CD8-positive, alpha-beta memory T cell (primary cell): ENCODE measurements at regions of chr1 and their contacts with region 1.

Region 1: DNA sequence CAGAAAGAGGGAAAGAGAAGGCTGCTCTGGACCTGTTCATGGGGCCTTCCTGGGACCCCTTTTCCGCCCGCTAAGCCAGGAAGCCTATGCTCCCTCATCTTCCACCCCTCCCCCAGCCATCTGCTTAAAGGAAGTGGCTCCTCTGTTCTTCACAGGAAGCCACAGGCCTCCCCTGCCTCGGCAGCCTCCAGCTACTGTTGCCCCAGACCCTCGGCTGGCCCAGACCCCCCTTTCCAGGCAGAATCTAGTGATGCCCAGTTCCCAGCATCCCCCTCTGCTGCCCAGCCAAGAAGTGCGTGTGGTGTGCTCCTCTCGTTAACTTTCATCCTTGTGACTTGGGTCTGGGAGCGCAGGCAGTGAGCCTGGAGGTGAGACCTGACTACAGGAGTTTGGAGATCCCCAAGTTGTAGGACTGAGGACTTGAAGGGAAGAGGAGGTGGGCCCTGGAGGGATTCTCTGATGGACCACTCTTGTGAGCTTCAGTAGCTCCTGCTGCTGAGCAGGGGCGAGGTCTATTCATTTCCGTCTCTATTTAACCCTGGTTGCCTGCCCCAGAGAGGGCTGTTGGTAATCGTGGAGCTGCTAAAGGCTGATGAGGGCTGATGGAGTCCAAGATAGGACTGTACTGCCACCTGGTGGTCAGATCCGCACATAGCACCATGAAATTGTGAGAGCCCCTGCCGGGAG is 9.1 kb downstream of the IFI6 start:
- DNase-seq: peak; percentile 81 to 91 (median 85)
- H3K4me3 ChIP-seq: peak overlapping the region; percentile 74
- H3K4me3 Mint-ChIP-seq: peak overlapping the region; percentile 64 to 89 (median 86)
- H3K27ac ChIP-seq: peak overlapping the region; percentile 81
- H3K27ac Mint-ChIP-seq: peak overlapping the region; percentile 97 to 99 (median 98)
- H3K4me1 ChIP-seq: peaks cover 48% of the 10 kb centered on the region
- H3K4me1 Mint-ChIP-seq: peaks cover 46 to 49% (median 48%) of the 10 kb centered on the region in 3 donors
- H3K27me3 ChIP-seq: no peaks in the 10 kb centered on the region
- H3K27me3 Mint-ChIP-seq: no peaks in the 10 kb centered on the region

Region 2: DNA sequence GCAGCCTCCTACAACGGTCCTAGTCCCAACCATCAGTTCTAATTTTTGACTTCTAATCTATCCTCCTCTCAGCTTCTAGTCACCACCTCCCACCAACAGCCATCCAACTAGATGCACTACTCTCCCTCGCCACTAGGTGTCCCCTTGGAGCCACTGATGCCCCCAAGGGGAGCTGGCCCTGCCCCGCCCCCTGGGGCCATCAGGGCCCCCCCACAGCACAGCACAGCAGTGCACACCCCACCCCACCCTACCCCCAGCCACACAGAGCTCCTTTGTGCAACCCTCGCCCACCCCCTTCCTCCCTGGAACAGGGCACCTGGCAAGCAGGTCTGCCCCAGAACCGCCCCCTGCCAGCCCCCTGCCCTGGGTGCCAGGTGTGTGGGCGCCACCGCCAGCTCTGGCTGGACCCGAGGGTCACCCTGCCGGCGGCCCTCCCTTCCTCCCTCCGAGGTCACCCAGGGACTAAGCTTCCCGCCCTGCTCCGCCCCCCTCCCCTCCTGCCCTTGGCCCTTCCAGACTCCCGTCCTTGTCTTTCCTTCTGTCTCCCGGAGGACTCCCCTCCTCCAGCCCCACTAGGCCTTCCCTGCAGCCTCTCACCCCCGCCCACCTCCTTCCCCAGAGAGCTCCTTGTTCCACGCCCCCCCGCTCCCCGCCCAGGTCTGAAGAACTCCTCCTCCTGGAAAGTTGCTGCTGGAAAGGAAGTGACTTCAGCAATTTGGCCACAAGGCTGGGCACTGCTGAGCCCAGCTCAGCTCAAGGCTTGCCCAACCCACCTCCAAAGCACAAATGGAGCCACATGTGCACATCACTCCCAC is 105.9 kb before region 1 on chr1:
- CTCF ChIA-PET with region 1: interaction called, 36 read pairs
- POLR2A ChIA-PET with region 1: interaction called, 6 read pairs
- DNase-seq: peak; percentile 58 to 82 (median 69)
- H3K4me3 ChIP-seq: peak overlapping the region; percentile 36
- H3K4me3 Mint-ChIP-seq: peak overlapping the region in 5 of 7 donors; percentile 1 to 42 (median 17)
- H3K27ac ChIP-seq: peak overlapping the region; percentile 25
- H3K27ac Mint-ChIP-seq: peak overlapping the region; percentile 12 to 82 (median 47)
- H3K4me1 ChIP-seq: peaks cover 26% of the 10 kb centered on the region
- H3K4me1 Mint-ChIP-seq: peaks cover 20 to 36% (median 20%) of the 10 kb centered on the region in 3 donors
- H3K27me3 ChIP-seq: no peaks in the 10 kb centered on the region
- H3K27me3 Mint-ChIP-seq: no peaks in the 10 kb centered on the region

Region 3: GRCh38 chr1:27568300-27569087 is 94.4 kb before region 1 on chr1:
- CTCF ChIA-PET with region 1: interaction called, 11 read pairs
- POLR2A ChIA-PET with region 1: interaction called, 3 read pairs
- DNase-seq: peak; percentile 91 to 94 (median 92)
- H3K4me3 ChIP-seq: peak overlapping the region; percentile 30
- H3K4me3 Mint-ChIP-seq: peak overlapping the region; percentile 8 to 83 (median 78)
- H3K27ac ChIP-seq: no peak overlapping the region
- H3K27ac Mint-ChIP-seq: peak overlapping the region; percentile 57 to 97 (median 92)
- H3K4me1 ChIP-seq: peaks cover 38% of the 10 kb centered on the region
- H3K4me1 Mint-ChIP-seq: peaks cover 25 to 33% (median 26%) of the 10 kb centered on the region in 3 donors
- H3K27me3 ChIP-seq: no peaks in the 10 kb centered on the region
- H3K27me3 Mint-ChIP-seq: no peaks in the 10 kb centered on the region

Region 4: GRCh38 chr1:27616441-27616840 is 46.4 kb before region 1 on chr1:
- CTCF ChIA-PET with region 1: interaction called, 127 read pairs
- POLR2A ChIA-PET with region 1: no interaction called
- DNase-seq: no peak
- H3K4me3 ChIP-seq: no peak overlapping the region
- H3K4me3 Mint-ChIP-seq: peak overlapping the region in 1 of 7 donors; percentile 38
- H3K27ac ChIP-seq: peak overlapping the region; percentile 13
- H3K27ac Mint-ChIP-seq: peak overlapping the region; percentile 73 to 97 (median 83)
- H3K4me1 ChIP-seq: peaks cover 65% of the 10 kb centered on the region
- H3K4me1 Mint-ChIP-seq: peaks cover 50 to 76% (median 57%) of the 10 kb centered on the region in 3 donors
- H3K27me3 ChIP-seq: no peaks in the 10 kb centered on the region
- H3K27me3 Mint-ChIP-seq: peaks cover 0 to 3% of the 10 kb centered on the region in 2 donors

Region 5: GRCh38 chr1:27632387-27633297 is 30.2 kb before region 1 on chr1:
- CTCF ChIA-PET with region 1: interaction called, 10 read pairs
- POLR2A ChIA-PET with region 1: interaction called, 4 read pairs
- DNase-seq: peak in 2 of 5 donors; percentile 34 to 74
- H3K4me3 ChIP-seq: no peak overlapping the region
- H3K4me3 Mint-ChIP-seq: peak overlapping the region; percentile 70 to 81 (median 79)
- H3K27ac ChIP-seq: peak overlapping the region; percentile 2
- H3K27ac Mint-ChIP-seq: peak overlapping the region; percentile 77 to 96 (median 92)
- H3K4me1 ChIP-seq: peaks cover 67% of the 10 kb centered on the region
- H3K4me1 Mint-ChIP-seq: peaks cover 62 to 80% (median 66%) of the 10 kb centered on the region in 3 donors
- H3K27me3 ChIP-seq: no peaks in the 10 kb centered on the region
- H3K27me3 Mint-ChIP-seq: no peaks in the 10 kb centered on the region

Region 6: GRCh38 chr1:27643701-27644625 is 18.9 kb before region 1 on chr1:
- CTCF ChIA-PET with region 1: interaction called, 56 read pairs
- POLR2A ChIA-PET with region 1: interaction called, 3 read pairs
- DNase-seq: peak; percentile 53 to 82 (median 64)
- H3K4me3 ChIP-seq: no peak overlapping the region
- H3K4me3 Mint-ChIP-seq: no peak overlapping the region
- H3K27ac ChIP-seq: no peak overlapping the region
- H3K27ac Mint-ChIP-seq: peak overlapping the region; percentile 23 to 81 (median 60)
- H3K4me1 ChIP-seq: peaks cover 14% of the 10 kb centered on the region
- H3K4me1 Mint-ChIP-seq: peaks cover 14 to 19% (median 15%) of the 10 kb centered on the region in 3 donors
- H3K27me3 ChIP-seq: no peaks in the 10 kb centered on the region
- H3K27me3 Mint-ChIP-seq: peaks cover 0 to 1% of the 10 kb centered on the region in 2 donors

Region 7: DNA sequence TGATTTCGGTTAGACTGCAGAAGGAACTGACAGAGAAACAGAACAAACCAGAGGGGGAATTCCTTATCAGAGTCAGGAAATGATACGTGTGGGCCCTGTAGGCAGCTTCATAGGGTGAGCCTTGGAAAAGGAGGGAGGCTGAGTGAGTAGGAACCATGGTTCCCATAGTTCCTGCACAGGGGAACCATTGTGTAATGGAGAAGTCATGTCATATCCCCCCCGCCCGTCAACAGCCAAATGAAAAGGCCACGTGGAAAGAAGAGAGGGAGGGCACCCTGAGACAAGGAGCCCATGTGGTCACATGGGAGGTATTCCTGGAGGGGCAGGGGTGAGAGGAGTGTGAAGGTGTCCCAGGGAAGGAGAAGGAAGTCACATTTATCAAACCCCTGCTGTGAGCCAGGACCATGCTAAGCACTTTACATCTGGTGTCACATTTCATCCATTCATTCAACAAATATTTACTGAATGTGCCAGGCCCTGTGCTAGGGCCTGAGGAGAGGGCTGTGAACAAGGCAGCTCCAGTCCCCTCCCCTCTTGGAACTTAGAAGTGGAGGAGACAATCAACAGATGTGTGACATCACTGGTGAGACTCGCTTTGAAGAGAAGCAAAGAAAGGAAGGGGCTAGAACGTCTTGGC is 12.2 kb before region 1 on chr1:
- CTCF ChIA-PET with region 1: interaction called, 19 read pairs
- POLR2A ChIA-PET with region 1: interaction called, 3 read pairs
- DNase-seq: no peak
- H3K4me3 ChIP-seq: no peak overlapping the region
- H3K4me3 Mint-ChIP-seq: peak overlapping the region in 1 of 7 donors; percentile 11
- H3K27ac ChIP-seq: no peak overlapping the region
- H3K27ac Mint-ChIP-seq: peak overlapping the region in 4 of 8 donors; percentile 38 to 83 (median 64)
- H3K4me1 ChIP-seq: peaks cover 8% of the 10 kb centered on the region
- H3K4me1 Mint-ChIP-seq: peaks cover 0 to 10% (median 3%) of the 10 kb centered on the region in 3 donors
- H3K27me3 ChIP-seq: no peaks in the 10 kb centered on the region
- H3K27me3 Mint-ChIP-seq: peaks cover 0 to 1% of the 10 kb centered on the region in 2 donors

Region 8: DNA sequence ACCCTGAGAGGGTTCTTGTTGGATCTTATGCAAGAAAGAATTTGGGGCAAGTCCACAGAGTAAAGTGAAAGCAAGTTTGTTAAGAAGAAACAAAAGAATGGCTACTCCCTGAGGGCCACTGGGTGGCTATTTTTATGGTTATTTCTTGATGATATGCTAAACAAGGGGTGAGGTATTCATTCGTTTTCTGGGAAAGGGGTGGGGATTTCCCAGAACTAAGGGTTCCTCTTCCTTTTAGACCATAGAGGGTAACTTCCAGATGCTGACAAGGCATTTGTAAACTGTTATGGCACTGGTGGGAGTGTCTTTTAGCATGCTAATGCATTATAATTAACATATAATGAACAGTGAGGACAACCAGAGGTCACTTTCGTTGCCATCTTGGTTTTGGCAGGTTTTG is 27.3 kb after region 1 on chr1:
- CTCF ChIA-PET with region 1: no interaction called
- POLR2A ChIA-PET with region 1: no interaction called
- DNase-seq: no peak
- H3K4me3 ChIP-seq: no peak overlapping the region
- H3K4me3 Mint-ChIP-seq: no peak overlapping the region
- H3K27ac ChIP-seq: no peak overlapping the region
- H3K27ac Mint-ChIP-seq: no peak overlapping the region
- H3K4me1 ChIP-seq: no peaks in the 10 kb centered on the region
- H3K4me1 Mint-ChIP-seq: peaks cover 0 to 7% (median 4%) of the 10 kb centered on the region in 3 donors
- H3K27me3 ChIP-seq: no peaks in the 10 kb centered on the region
- H3K27me3 Mint-ChIP-seq: peaks cover 4 to 10% of the 10 kb centered on the region in 2 donors